ENCODE measurements at regions of chr2 and their contacts with region 1.

Region 1: DNA sequence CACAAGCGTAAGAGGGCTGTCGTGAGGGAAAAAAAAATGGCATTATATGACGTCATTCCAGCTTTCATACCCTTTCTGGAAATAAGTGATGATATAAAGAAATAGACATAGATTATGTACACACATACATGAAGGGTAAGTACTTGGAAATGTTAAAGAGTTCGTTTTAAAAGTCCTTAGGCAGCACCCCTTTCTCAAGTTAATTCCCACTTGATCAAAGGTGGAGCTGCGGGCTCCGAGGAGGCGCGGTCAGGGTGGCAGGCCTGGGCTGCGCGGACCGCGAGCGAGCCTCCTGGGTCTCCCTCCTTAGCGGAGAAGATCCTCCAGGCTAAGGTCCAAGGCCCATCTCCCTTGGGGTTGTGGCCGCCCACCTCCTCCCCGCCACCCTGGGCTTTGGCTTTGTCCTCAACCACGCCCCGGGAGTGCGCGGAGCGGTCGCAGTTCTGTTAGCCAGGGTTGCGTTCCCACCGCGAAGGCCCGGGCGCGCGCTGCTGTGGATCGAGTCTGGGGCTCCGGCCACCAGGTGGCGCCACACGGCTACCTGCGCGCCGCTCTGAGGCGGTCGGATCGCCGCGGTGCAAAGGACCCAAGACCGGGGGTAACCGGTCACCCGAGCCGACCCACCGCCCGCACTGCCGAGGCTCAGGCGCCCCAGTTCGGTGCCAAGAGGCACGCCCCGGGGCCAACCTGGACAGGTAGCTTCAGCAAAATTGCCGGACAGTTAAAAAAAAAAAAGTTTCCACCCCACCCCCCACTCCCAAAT is 66.8 kb downstream of the HNRNPLL start:
- DNase-seq: peak; percentile 72
- H3K4me3 Mint-ChIP-seq: peak overlapping the region; percentile 49
- H3K27ac Mint-ChIP-seq: no peak overlapping the region
- H3K4me1 Mint-ChIP-seq: no peaks in the 10 kb centered on the region
- H3K27me3 Mint-ChIP-seq: peaks cover 28% of the 10 kb centered on the region

Region 2: DNA sequence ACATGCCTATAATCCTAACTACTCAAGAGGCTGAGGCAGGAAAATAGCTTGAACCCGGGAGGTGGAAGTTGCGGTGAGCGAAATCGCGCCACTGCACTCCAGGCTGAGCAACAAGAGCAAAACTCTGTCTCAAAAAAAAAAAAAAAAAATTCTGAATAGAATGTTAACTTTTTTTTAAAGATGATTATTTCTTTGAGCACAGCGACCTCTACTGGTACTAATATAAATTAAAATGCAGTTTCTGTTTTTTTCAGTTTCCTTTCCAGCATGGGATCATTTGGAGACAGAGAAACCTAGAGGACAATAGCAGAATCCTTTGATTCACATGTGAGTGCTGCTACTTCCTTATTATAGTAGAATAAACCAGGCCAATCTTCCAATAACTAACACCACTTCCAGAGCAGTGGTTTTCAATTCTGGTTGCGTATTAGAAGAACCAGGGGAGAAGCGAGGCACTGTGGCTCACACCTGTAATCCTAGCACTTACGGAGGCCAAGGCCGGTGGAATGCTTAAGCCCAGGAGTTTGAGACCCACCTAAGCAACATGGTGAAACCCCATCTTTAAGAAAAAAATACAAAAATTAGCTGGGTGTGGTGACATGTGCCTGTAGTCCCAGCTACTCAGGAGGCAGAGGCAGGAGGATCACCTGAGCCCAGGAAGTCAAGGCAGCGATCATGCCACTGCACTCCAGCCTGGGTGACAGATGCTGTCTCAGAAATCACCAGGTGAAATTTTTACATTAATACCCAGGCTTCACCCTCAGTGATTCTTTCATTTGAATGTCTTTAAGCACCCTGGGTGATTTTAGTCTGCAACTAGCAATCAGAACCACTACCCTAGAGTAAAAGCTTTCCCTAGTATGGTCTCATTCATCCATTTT is 205.2 kb after region 1 on chr2:
- intact Hi-C with region 1: loop called (anchors 5 kb)
- DNase-seq: no peak
- H3K4me3 Mint-ChIP-seq: no peak overlapping the region
- H3K27ac Mint-ChIP-seq: no peak overlapping the region
- H3K4me1 Mint-ChIP-seq: peaks cover 24% of the 10 kb centered on the region
- H3K27me3 Mint-ChIP-seq: no peaks in the 10 kb centered on the region

Region 3: GRCh38 chr2:38835015-38835601 is 299.2 kb after region 1 on chr2:
- intact Hi-C with region 1: loop called (anchors 1 kb)
- DNase-seq: no peak
- H3K4me3 Mint-ChIP-seq: no peak overlapping the region
- H3K27ac Mint-ChIP-seq: no peak overlapping the region
- H3K4me1 Mint-ChIP-seq: no peaks in the 10 kb centered on the region
- H3K27me3 Mint-ChIP-seq: no peaks in the 10 kb centered on the region